Activated CD4-positive, alpha-beta T cell treated with anti-CD3 and anti-CD28 coated beads for 36 hours (primary cell): ENCODE measurements at regions of chr2 and their contacts with region 1.

Region 1: DNA sequence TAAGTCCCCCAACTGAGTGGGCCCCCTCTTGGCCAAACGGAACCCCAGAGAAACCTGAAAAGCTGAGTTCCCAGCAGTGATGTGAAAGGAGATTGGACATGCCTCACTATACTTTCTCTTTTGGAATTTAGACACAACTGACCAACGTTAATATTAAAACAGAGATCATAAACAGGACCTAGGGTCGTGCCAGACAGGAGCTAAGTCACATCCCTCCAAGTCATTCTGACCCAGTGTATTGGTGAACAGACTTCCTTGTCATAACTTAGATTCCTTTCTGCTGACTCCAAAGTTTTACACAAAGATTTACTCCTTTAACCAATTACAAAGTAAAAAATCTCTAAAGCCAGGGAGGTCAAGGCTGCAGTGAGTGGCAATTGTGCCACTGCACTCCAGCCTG is 46.9 kb downstream of the UXS1 start:
- DNase-seq: no peak
- ATAC-seq: no peak
- H3K4me3 Mint-ChIP-seq: no peak overlapping the region
- H3K27ac Mint-ChIP-seq: peak overlapping the region; percentile 52
- H3K4me1 Mint-ChIP-seq: peaks cover 49% of the 10 kb centered on the region
- H3K27me3 Mint-ChIP-seq: no peaks in the 10 kb centered on the region

Region 2: DNA sequence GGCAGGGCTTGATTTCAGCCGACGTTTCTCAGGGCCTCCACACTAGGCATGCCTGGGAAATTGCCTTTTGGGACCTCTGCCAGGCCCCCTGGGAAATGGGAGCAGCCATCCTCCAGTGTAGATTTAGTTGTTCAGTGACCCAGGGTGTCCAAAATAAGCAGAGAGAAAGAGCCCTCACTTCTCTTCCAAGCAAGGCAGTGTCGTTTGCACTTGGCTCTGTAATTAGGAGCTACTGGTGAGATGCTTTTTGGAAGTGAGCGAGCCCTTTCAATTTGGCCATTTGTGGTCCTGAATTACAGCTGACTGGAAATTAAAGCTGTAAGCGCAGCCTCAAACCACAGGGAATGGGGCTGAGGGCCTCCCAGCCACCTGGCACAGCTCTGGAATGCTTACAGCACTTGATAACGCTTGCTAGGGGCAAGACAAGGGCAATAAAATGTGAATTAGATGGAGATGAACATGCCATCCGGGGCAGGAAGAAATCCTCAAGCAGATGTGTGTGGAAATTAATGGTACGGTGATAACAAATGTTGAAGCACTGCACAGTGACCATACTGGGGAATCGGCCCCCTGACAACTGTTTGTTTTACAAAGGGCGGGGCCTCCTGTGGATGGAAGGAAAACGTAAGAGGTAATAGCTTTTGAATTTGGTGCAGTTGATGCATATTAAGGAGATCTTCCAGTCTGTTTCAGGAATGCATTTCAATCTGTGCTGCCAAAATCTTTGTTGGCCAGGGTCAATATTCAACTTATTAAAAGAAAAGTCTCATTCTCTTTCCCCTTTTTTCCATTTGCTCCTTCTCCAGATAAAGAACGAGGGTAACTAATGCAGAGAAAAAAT is 126.1 kb before region 1 on chr2:
- CTCF ChIA-PET with region 1: no interaction called
- POLR2A ChIA-PET with region 1: no interaction called
- intact Hi-C with region 1: no loop called
- DNase-seq: no peak
- ATAC-seq: no peak
- H3K4me3 Mint-ChIP-seq: no peak overlapping the region
- H3K27ac Mint-ChIP-seq: no peak overlapping the region
- H3K4me1 Mint-ChIP-seq: peaks cover 3% of the 10 kb centered on the region
- H3K27me3 Mint-ChIP-seq: no peaks in the 10 kb centered on the region

Region 3: GRCh38 chr2:106129150-106129549 is 18.0 kb before region 1 on chr2:
- CTCF ChIA-PET with region 1: no interaction called
- POLR2A ChIA-PET with region 1: no interaction called
- intact Hi-C with region 1: no loop called
- DNase-seq: no peak
- ATAC-seq: no peak
- H3K4me3 Mint-ChIP-seq: no peak overlapping the region
- H3K27ac Mint-ChIP-seq: no peak overlapping the region
- H3K4me1 Mint-ChIP-seq: peaks cover 25% of the 10 kb centered on the region
- H3K27me3 Mint-ChIP-seq: no peaks in the 10 kb centered on the region

Region 4: GRCh38 chr2:106160786-106161261 is 13.7 kb after region 1 on chr2:
- CTCF ChIA-PET with region 1: interaction called, 15 read pairs
- POLR2A ChIA-PET with region 1: no interaction called
- intact Hi-C with region 1: no loop called
- DNase-seq: peak; percentile 70
- ATAC-seq: peak; percentile 71
- H3K4me3 Mint-ChIP-seq: peak overlapping the region; percentile 70
- H3K27ac Mint-ChIP-seq: peak overlapping the region; percentile 91
- H3K4me1 Mint-ChIP-seq: peaks cover 88% of the 10 kb centered on the region
- H3K27me3 Mint-ChIP-seq: no peaks in the 10 kb centered on the region

Region 5: DNA sequence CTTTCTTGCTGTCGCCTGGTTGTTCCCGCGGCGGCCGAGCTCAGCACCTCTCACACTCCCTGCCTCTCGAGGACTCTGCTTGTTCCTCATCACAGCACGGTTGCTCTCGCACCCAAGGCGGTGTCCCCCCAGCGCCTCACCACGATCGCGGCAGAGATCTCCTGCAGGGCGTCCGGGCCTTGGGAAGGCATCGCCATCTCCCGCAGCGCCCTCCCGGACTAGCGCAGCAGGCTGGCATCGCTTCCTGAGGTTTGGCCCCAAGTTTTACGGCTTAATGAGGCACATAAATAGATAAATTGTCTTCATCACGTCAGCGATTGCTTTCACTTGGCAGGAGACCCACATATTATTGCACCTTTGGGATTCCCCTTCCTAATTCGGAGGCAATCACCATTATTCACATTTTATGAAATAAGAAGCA is 195.7 kb after region 1 on chr2:
- CTCF ChIA-PET with region 1: no interaction called
- POLR2A ChIA-PET with region 1: no interaction called
- intact Hi-C with region 1: no loop called
- DNase-seq: no peak
- ATAC-seq: no peak
- H3K4me3 Mint-ChIP-seq: no peak overlapping the region
- H3K27ac Mint-ChIP-seq: no peak overlapping the region
- H3K4me1 Mint-ChIP-seq: no peaks in the 10 kb centered on the region
- H3K27me3 Mint-ChIP-seq: no peaks in the 10 kb centered on the region